ENCODE measurements at regions of chr18 and their contacts with region 1.

Region 1: DNA sequence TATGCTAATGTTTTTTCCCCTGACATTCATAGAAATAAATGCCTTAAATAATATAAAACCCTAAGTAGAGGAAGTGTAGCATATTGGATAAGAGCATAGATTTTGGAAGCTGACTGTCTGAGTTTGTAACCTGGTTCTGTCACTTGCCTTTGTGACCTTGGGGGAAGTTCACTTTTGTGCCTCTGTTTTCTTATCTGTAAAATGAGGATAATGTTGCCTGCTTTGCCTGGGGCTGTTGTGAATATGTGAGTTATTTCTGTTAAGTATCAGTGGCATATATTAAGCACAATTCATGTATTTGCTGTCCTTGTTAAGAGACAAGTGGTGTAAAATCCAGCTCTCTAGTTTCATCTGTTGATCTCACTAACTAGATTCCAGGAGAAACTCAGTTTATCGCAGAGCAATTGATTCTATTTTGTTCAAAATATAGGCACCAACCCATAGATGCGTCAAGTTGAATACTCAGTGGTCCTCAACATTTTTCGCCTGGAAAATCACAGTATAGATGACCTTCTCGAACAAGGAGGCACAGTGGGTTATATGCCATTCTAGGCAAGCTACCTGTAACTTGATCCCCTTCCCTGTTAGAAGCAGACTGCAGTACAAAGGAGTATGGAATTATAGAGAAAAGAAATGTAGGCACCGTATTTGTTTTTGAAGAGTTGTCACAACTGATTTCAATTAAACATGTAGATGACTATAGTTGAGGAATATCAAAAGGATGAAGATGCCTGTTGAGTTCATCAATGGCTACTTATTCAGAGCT is 67.0 kb downstream of the SOCS6 start:
- DNase-seq: no peak
- H3K4me3 ChIP-seq: no peak overlapping the region
- H3K27ac ChIP-seq: peak overlapping the region; percentile 94
- H3K4me1 ChIP-seq: peaks cover 43% of the 10 kb centered on the region
- H3K27me3 ChIP-seq: no peaks in the 10 kb centered on the region
- CTCF ChIP-seq: no peak

Region 2: DNA sequence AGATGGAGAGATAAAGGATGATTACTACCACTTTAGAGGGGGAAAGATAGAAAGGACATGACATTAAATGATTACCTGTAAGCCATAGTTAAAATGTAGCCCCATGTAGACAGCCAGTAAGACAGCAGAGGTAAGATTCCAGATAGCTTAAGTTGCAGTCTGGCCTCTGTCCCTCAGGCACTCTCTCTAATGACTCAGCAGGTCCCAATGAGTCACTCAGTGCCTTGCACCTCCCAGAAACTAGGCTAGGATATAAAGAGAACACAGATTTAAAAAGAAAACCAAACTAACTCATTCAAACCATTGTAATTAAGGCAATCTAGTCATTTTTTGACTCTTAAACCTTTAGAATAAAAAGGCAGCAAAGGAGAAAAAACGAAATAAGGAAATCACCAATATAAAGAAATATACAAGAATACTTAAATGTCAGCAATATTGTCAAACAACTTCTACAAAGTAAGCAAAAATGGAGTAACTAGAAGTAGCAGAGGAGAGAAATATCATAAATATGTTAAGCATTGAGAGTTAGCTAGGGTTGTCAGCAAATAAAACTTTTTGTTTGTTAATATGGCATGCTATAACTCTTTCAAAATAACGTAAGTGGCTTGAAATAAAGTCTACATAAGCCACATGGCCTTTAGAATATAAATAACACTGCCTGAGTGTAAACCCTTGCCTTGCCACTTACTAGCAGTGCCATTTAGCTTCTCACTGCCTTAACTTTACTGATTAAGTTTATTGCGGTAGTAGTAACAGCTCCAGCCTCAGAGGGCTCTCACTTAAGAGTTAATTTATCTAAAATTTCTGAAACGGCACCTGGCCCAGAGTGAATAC is 18.4 kb before region 1 on chr18:
- CTCF ChIA-PET with region 1: no interaction called
- POLR2A ChIA-PET with region 1: no interaction called
- intact Hi-C with region 1: loop called (anchors 2 kb)
- DNase-seq: peak; percentile 59 to 88
- H3K4me3 ChIP-seq: peak overlapping the region; percentile 15; the same call in 1 of the 2 replicates
- H3K27ac ChIP-seq: peak overlapping the region; percentile 95
- H3K4me1 ChIP-seq: peaks cover 42% of the 10 kb centered on the region
- H3K27me3 ChIP-seq: no peaks in the 10 kb centered on the region
- CTCF ChIP-seq: no peak